Activated naive CD4-positive, alpha-beta T cell treated with anti-CD3 and anti-CD28 coated beads for 36 hours (primary cell): ENCODE measurements at regions of chr6 and their contacts with region 1.

Region 1: DNA sequence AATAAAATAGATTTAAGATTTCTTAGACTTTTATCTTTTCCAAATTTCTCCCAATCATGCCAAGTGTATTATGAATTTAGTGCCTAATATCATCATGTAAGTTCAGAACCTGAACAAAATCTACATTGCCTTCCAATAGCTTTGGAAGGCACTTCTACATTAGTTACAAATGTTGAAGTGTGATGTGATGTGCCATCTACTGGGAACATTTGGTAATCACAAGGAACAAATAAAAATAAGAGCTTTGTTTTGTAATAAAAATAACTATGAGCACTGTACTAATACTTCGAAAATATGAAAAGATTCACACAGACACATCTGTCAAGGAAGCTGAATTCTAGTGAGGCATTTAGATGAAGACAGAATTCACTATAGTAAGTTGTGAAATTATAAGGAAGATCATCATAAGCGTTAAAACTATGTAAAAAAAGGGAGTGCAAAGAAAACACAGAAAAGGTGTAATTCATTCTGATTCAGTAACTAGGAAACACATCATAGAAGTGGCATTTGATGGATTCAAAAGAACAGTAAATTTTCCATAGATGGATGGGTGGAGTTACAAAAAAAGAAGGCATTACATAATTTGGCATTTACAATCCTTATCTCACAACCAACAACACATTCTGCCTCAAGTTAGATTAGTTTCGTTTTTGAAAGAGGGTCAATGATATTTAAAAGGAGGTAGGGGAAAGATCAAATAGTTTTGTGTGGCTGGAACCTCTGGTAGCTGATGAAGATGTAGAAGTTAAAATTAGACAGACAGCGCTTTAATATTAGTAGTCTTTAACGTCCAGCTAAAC is 161.0 kb downstream of the ASCC3 start:
- DNase-seq: no peak
- H3K4me3 Mint-ChIP-seq: no peak overlapping the region
- H3K27ac Mint-ChIP-seq: no peak overlapping the region
- H3K4me1 Mint-ChIP-seq: peaks cover 23% of the 10 kb centered on the region
- H3K27me3 Mint-ChIP-seq: no peaks in the 10 kb centered on the region

Region 2: DNA sequence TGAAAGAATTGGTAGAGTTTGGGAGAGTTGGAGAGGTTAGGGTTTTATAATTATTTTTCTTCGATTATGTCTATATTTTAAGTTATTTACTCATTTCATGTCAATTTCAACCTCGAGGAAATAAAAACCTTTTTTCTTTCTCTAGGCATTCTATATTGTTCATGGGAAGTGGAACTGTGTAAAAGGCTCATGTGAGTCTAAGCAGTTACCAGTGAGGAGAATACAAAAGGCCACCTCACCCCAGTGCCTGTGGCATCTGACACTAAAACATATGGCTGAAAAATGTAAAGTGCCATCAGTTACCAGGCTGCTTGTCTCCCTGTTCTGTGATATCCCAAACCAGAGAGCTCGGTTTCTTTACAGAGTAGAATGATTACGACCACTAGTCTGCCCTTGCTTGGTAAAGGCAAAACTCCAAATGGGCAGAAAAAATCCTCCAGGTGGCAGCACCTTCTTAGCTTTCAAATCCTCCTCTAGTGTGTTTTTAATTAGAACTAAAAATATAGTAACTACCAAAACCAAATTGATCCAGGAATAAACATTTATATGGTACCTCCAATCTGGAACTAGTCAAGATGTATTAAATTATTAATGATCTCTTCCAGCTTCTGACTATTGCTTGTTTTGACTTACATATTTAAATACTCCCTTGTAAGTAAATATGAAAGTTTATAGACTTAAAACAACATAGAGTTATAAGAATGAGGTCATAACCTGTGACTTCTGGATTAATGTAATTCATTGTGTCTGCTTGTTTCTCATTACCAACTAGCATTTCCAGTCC is 603.5 kb before region 1 on chr6:
- CTCF ChIA-PET with region 1: no interaction called
- intact Hi-C with region 1: loop called (anchors 5 kb)
- DNase-seq: peak; percentile 42
- H3K4me3 Mint-ChIP-seq: no peak overlapping the region
- H3K27ac Mint-ChIP-seq: no peak overlapping the region
- H3K4me1 Mint-ChIP-seq: no peaks in the 10 kb centered on the region
- H3K27me3 Mint-ChIP-seq: peaks cover 9% of the 10 kb centered on the region

Region 3: GRCh38 chr6:100678027-100678426 is 42.1 kb before region 1 on chr6:
- CTCF ChIA-PET with region 1: no interaction called
- intact Hi-C with region 1: loop called (anchors 1 kb)
- DNase-seq: no peak
- H3K4me3 Mint-ChIP-seq: no peak overlapping the region
- H3K27ac Mint-ChIP-seq: no peak overlapping the region
- H3K4me1 Mint-ChIP-seq: no peaks in the 10 kb centered on the region
- H3K27me3 Mint-ChIP-seq: no peaks in the 10 kb centered on the region